ENCODE measurements at regions of chr5 and their contacts with region 1.

Region 1: DNA sequence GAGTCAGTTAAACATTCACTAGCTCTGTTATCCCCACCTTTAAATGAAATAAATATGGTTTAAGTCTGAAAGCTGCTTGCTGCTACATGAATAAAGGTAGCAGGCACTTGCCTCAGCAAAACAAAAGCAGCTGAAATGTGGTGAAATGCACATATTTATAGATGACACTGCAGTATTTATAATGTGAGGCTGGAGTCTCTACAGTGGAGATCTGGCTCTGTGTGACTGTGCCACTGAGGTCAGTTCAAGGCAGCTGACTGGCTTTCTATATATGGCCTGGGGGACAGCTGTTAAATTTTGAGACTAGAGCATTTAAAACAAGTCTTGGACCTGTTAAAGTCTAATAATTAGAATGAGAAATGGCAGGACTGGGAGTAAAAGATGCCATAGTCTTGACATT is 859.6 kb upstream of the SEMA6A start:
- DNase-seq: no peak
- H3K4me3 ChIP-seq: no peak overlapping the region
- H3K4me3 Mint-ChIP-seq: no peak overlapping the region
- H3K27ac ChIP-seq: no peak overlapping the region
- H3K27ac Mint-ChIP-seq: no peak overlapping the region
- H3K4me1 ChIP-seq: no peaks in the 10 kb centered on the region
- H3K4me1 Mint-ChIP-seq: no peaks in the 10 kb centered on the region
- H3K27me3 ChIP-seq: no peaks in the 10 kb centered on the region
- H3K27me3 Mint-ChIP-seq: no peaks in the 10 kb centered on the region

Region 2: DNA sequence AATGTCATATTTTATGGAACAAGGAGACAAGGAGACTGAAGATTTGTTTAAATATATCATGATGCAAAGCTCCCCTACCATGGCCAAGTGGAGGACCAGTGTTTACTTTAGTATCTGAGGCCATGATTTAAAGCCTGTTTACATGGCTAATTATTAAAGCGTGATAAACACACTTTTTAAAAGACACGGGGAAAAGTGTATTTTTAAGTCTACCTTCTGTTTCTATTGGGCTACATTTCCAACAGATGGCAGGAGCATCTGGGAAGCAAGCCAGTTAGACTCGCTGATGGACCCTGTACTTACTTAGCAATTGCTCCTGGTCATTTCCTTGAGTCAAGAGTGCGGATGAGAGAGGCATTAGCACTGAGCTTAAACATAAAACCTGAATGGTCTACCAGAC is 379.3 kb before region 1 on chr5:
- CTCF ChIA-PET with region 1: no interaction called
- POLR2A ChIA-PET with region 1: no interaction called
- intact Hi-C with region 1: no loop called
- DNase-seq: no peak
- H3K4me3 ChIP-seq: no peak overlapping the region
- H3K4me3 Mint-ChIP-seq: no peak overlapping the region
- H3K27ac ChIP-seq: no peak overlapping the region
- H3K27ac Mint-ChIP-seq: no peak overlapping the region
- H3K4me1 ChIP-seq: no peaks in the 10 kb centered on the region
- H3K4me1 Mint-ChIP-seq: no peaks in the 10 kb centered on the region
- H3K27me3 ChIP-seq: no peaks in the 10 kb centered on the region
- H3K27me3 Mint-ChIP-seq: no peaks in the 10 kb centered on the region

Region 3: DNA sequence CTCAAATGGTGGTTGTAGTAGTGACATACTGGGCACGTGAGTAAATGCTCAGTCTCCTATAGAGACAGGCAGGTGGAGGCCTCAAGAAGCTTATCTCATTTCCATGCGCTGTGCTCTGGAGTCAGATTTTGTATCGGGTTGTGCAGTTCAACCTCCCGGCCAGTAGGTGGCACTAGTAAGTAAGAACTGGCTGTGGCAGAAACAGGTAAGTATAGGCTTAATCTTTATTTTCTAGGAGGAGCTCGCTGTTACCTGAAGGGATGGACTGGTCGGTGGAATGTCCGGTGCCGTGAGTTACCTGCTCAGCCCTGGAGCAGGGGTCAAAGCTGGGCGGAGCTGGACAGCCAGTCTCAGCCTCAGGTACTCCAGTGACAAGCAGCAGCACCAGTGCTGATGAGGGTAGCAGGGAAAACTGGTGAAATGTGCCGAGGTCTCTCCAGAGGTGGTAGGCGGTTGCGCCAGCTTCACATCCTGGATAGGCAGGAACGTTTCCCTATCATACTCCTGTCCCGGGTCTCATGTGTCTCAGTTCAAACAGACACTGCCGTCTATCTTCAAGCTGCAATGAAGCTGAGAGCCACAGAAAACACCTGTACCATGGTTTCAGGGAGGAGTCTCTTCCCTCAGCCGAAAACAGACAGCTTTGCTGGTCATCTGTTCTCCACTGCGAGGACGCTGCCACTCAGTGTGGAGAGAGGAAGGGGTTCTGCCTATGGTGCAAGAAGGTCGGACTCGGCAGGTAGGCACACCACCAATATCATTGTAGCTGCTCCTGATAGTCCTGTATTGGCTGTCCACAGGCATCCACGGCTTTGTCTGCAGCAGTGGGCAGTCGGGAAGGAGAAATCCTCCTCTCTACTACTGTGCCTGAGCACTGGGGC is 20.7 kb after region 1 on chr5:
- CTCF ChIA-PET with region 1: interaction called, 11 read pairs
- POLR2A ChIA-PET with region 1: no interaction called
- intact Hi-C with region 1: no loop called
- DNase-seq: peak in 4 of 5 donors; percentile 36 to 47 (median 46)
- H3K4me3 ChIP-seq: peak overlapping the region in 1 of 2 donors; percentile 38
- H3K4me3 Mint-ChIP-seq: peak overlapping the region; percentile 24 to 85 (median 76)
- H3K27ac ChIP-seq: no peak overlapping the region
- H3K27ac Mint-ChIP-seq: peak overlapping the region in 2 of 7 donors; percentile 25 to 60
- H3K4me1 ChIP-seq: peaks cover 7% of the 10 kb centered on the region
- H3K4me1 Mint-ChIP-seq: peaks cover 3 to 17% (median 9%) of the 10 kb centered on the region in 4 donors
- H3K27me3 ChIP-seq: no peaks in the 10 kb centered on the region
- H3K27me3 Mint-ChIP-seq: peaks cover 0 to 3% of the 10 kb centered on the region in 2 donors